ENCODE measurements at regions of chr22 and their contacts with region 1.

Region 1: GRCh38 chr22:30396871-30397655 is at the start of gene SEC14L2:
- DNase-seq: peak; percentile 83 to 92
- ATAC-seq: peak; percentile 76
- H3K4me3 ChIP-seq: peak within 1 kb of the TSS; percentile 49 to 80
- H3K27ac ChIP-seq: no peak within 1 kb of the TSS
- H3K4me1 ChIP-seq: peaks cover 0 to 2% of the 10 kb centered on the region in 2 donors
- H3K27me3 ChIP-seq: no peaks in the 10 kb centered on the region
- total RNA-seq, gene SEC14L2: 11.8 to 14.7 TPM

Region 2: GRCh38 chr22:30423982-30424963 is 27.2 kb after region 1 on chr22:
- intact Hi-C with region 1: loop called in 1 of 2 experiments (anchors 1 kb)
- DNase-seq: peak; percentile 99 to 100
- ATAC-seq: peak; percentile 96
- H3K4me3 ChIP-seq: peak overlapping the region; percentile 12 to 19
- H3K27ac ChIP-seq: peak overlapping the region in 1 of 2 donors; percentile 70
- H3K4me1 ChIP-seq: peaks cover 0 to 3% of the 10 kb centered on the region in 2 donors
- H3K27me3 ChIP-seq: no peaks in the 10 kb centered on the region

Region 3: GRCh38 chr22:30435674-30436126 is 38.6 kb after region 1 on chr22:
- intact Hi-C with region 1: no loop called
- DNase-seq: peak; percentile 61 to 75
- ATAC-seq: no peak
- H3K4me3 ChIP-seq: no peak overlapping the region
- H3K27ac ChIP-seq: no peak overlapping the region
- H3K4me1 ChIP-seq: no peaks in the 10 kb centered on the region
- H3K27me3 ChIP-seq: no peaks in the 10 kb centered on the region

Measured in aorta (tissue), 5 donors.